PC-9 (cell line): ENCODE measurements at regions of chr19 and their contacts with region 1.

Region 1: GRCh38 chr19:35306473-35307246 is 14.7 kb downstream of the MAG start:
- DNase-seq: peak; percentile 50 to 51
- H3K4me3 ChIP-seq: no peak overlapping the region
- H3K27ac ChIP-seq: no peak overlapping the region
- H3K4me1 ChIP-seq: peaks cover 39% of the 10 kb centered on the region
- H3K27me3 ChIP-seq: no peaks in the 10 kb centered on the region
- CTCF ChIP-seq: peak; percentile 61

Region 2: GRCh38 chr19:34639491-34640085 is 667.1 kb before region 1 on chr19:
- CTCF ChIA-PET with region 1: interaction called, 21 read pairs
- POLR2A ChIA-PET with region 1: no interaction called
- intact Hi-C with region 1: no loop called
- DNase-seq: peak in 1 of 2 experiments; percentile 18
- H3K4me3 ChIP-seq: no peak overlapping the region
- H3K27ac ChIP-seq: no peak overlapping the region
- H3K4me1 ChIP-seq: no peaks in the 10 kb centered on the region
- H3K27me3 ChIP-seq: no peaks in the 10 kb centered on the region
- CTCF ChIP-seq: peak; percentile 77

Region 3: DNA sequence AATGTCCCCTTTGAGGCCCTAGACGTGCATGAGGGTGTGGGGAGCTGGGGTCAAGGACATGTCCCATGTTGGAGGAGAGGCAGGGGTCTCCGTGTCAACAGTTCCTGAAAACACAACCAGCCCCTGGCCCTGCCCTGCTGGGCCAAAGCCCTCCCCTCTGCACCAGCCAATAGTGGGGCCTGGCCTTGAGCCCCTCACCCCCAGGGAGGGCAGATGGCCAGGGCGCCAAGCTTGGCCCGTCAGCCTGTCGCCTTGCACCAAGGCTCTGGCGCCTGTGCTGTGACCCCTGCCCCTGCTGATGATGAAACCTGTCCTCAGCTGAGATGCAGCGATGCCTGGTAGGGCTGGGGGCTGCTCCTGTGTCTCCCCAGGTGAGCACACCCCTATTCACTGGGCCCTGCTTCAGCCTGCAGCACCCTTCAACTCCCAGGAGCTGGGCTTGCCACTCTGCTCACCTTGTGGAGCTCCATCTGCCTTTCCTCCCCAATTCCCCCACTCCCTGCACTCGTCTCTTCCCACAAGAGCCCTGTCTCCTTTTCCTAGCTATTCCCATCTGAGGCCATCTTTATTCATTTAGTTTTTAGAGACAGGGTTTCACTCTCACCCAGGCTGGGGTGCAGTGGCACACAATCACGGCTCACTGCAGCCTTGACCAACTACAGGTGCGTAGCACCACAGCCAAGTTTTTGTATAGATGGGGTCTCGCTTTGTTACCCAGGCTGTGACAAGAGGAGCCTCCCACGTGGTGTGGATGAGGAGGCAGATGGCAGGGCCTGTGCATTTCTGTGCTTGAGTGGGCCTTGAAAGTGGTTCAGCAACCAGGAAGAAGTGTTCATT is 26.5 kb before region 1 on chr19:
- CTCF ChIA-PET with region 1: no interaction called
- POLR2A ChIA-PET with region 1: no interaction called
- intact Hi-C with region 1: no loop called
- DNase-seq: no peak
- H3K4me3 ChIP-seq: no peak overlapping the region
- H3K27ac ChIP-seq: no peak overlapping the region
- H3K4me1 ChIP-seq: no peaks in the 10 kb centered on the region
- H3K27me3 ChIP-seq: no peaks in the 10 kb centered on the region
- CTCF ChIP-seq: no peak

Region 4: GRCh38 chr19:35318650-35319448 is 12.2 kb after region 1 on chr19:
- CTCF ChIA-PET with region 1: interaction called, 4 read pairs
- POLR2A ChIA-PET with region 1: interaction called, 5 read pairs
- intact Hi-C with region 1: loop called (anchors 1 kb)
- DNase-seq: peak; percentile 98 to 99
- H3K4me3 ChIP-seq: peak overlapping the region; percentile 11; the same call in 1 of the 2 replicates
- H3K27ac ChIP-seq: peak overlapping the region; percentile 98
- H3K4me1 ChIP-seq: peaks cover 63% of the 10 kb centered on the region
- H3K27me3 ChIP-seq: no peaks in the 10 kb centered on the region
- CTCF ChIP-seq: no peak

Region 5: GRCh38 chr19:35395382-35396199 is 88.9 kb after region 1 on chr19:
- CTCF ChIA-PET with region 1: no interaction called
- POLR2A ChIA-PET with region 1: no interaction called
- intact Hi-C with region 1: no loop called
- DNase-seq: no peak
- H3K4me3 ChIP-seq: no peak overlapping the region
- H3K27ac ChIP-seq: no peak overlapping the region
- H3K4me1 ChIP-seq: no peaks in the 10 kb centered on the region
- H3K27me3 ChIP-seq: peaks cover 34% of the 10 kb centered on the region
- CTCF ChIP-seq: no peak

Region 6: GRCh38 chr19:35468637-35469036 is 162.0 kb after region 1 on chr19:
- CTCF ChIA-PET with region 1: no interaction called
- POLR2A ChIA-PET with region 1: interaction called, 4 read pairs
- intact Hi-C with region 1: loop called (anchors 5 kb)
- DNase-seq: peak; percentile 38 to 55
- H3K4me3 ChIP-seq: no peak overlapping the region
- H3K27ac ChIP-seq: no peak overlapping the region
- H3K4me1 ChIP-seq: no peaks in the 10 kb centered on the region
- H3K27me3 ChIP-seq: no peaks in the 10 kb centered on the region
- CTCF ChIP-seq: peak; percentile 79

Region 7: DNA sequence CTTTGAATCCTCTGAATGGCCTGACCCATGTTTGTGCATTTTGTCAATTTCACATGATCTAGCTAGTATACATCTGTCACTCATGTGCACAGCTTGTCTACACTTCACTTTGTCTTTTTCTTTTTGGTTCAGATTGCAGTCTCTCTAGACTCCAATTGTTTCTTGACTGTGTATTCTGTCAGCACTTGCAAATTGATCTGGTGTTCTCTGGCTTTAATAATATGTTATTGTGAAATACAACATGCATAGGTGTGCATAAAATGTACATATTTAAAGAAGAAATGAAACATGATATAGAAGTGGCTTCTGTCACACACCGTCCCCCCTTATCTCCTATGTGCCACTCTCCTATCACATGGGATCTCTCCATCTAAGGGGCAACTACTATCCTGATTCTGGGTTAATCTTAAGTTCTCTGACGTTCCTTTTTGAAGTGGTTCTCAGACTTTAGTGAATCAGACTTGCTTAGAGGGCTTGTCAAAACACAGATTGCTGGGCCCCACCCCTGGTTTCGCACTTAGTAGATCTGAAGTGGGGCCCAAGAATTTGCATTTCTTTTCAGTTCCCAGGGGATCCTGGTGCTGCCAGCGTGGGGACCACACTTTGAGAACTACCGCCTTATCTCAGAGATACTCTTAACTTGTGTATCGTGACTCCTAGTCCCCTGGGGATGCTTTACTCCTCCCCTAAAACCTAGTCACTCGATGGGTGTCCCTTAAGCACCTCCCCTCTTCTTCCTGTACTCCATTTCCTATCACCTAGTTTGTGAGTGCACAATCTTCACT is 177.8 kb after region 1 on chr19:
- CTCF ChIA-PET with region 1: no interaction called
- POLR2A ChIA-PET with region 1: no interaction called
- intact Hi-C with region 1: no loop called
- DNase-seq: no peak
- H3K4me3 ChIP-seq: no peak overlapping the region
- H3K27ac ChIP-seq: no peak overlapping the region
- H3K4me1 ChIP-seq: no peaks in the 10 kb centered on the region
- H3K27me3 ChIP-seq: peaks cover 37% of the 10 kb centered on the region
- CTCF ChIP-seq: no peak